Sciatic nerve (tissue), 2 donors: ENCODE measurements at regions of chr9 and their contacts with region 1.

Region 1: GRCh38 chr9:100160021-100160420 is 61.0 kb downstream of the INVS start:
- DNase-seq: no peak
- ATAC-seq: no peak

Region 2: GRCh38 chr9:100111235-100111634 is 48.8 kb before region 1 on chr9:
- intact Hi-C with region 1: no loop called
- DNase-seq: peak; percentile 86
- ATAC-seq: peak; percentile 95

Region 3: GRCh38 chr9:100440071-100440847 is 280.2 kb after region 1 on chr9:
- intact Hi-C with region 1: loop called (anchors 5 kb)
- DNase-seq: no peak
- ATAC-seq: peak; percentile 15